ENCODE measurements at regions of chr12 and their contacts with region 1.

Region 1: DNA sequence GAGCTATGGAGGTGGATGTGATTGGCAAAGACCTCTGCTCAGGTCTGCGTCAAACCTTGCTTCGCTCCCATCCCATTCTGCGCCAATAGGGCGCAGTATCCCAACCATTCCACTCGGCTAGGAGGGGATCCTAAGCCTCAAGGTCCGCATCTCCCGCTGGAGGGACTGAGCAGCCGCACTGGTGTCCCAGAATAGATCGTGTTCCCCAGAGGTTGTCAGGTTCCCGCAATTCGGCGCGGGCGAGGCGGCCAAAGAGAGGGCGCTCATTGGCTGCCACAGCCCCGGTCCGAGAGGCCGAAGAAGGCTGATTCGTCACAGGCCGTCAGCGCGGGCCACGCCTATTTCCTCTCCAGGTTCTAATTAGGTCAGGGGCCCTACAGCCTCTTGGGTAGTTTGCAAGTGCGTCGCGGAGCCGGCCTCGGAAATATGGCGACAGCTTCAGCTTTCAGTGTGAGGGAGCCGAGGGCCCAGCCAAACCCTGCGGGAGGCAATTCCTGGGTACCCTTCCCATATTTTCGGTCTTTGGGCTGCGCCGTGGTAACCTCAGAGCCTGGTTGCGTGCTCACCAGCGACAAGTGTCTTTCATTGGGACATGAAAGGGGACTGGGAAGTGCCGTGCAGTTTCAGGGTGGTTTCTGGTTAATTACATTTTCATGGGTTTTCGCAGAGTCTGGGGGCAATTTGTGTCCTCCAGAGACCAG is 5.0 kb downstream of the OR10AD1 start:
- DNase-seq: peak; percentile 97
- ATAC-seq: peak; percentile 98
- H3K4me3 Mint-ChIP-seq: peak overlapping the region; percentile 80
- H3K27ac Mint-ChIP-seq: peak overlapping the region; percentile 99
- H3K4me1 Mint-ChIP-seq: peaks cover 30% of the 10 kb centered on the region
- H3K27me3 Mint-ChIP-seq: peaks cover 4% of the 10 kb centered on the region

Region 2: GRCh38 chr12:47904713-47905310 is 293.3 kb before region 1 on chr12 and contains the start of gene VDR:
- CTCF ChIA-PET with region 1: no interaction called
- POLR2A ChIA-PET with region 1: no interaction called
- intact Hi-C with region 1: loop called in 1 of 2 experiments (anchors 1 kb)
- DNase-seq: peak; percentile 88
- ATAC-seq: peak; percentile 76
- H3K4me3 Mint-ChIP-seq: peak within 1 kb of the TSS; percentile 94
- H3K27ac Mint-ChIP-seq: peak within 1 kb of the TSS; percentile 92
- H3K4me1 Mint-ChIP-seq: peaks cover 45% of the 10 kb centered on the region
- H3K27me3 Mint-ChIP-seq: peaks cover 20% of the 10 kb centered on the region
- total RNA-seq, gene VDR: 108 to 124 TPM

Region 3: DNA sequence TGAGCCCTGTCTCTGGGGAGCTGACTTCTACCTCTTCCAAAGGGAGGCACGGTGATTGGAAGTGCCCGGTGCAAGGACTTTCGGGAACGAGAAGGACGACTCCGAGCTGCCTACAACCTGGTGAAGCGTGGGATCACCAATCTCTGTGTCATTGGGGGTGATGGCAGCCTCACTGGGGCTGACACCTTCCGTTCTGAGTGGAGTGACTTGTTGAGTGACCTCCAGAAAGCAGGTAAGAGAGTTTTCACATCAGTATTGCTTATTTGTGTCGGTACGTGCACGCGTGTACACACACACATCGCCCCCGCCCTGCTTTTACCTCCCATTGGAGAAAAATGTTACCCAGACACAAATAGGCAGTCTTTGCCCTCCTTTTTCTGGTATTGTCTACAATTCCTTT is 65.3 kb before region 1 on chr12:
- CTCF ChIA-PET with region 1: no interaction called
- POLR2A ChIA-PET with region 1: no interaction called
- intact Hi-C with region 1: no loop called
- DNase-seq: no peak
- ATAC-seq: no peak
- H3K4me3 Mint-ChIP-seq: no peak overlapping the region
- H3K27ac Mint-ChIP-seq: no peak overlapping the region
- H3K4me1 Mint-ChIP-seq: no peaks in the 10 kb centered on the region
- H3K27me3 Mint-ChIP-seq: no peaks in the 10 kb centered on the region

Region 4: DNA sequence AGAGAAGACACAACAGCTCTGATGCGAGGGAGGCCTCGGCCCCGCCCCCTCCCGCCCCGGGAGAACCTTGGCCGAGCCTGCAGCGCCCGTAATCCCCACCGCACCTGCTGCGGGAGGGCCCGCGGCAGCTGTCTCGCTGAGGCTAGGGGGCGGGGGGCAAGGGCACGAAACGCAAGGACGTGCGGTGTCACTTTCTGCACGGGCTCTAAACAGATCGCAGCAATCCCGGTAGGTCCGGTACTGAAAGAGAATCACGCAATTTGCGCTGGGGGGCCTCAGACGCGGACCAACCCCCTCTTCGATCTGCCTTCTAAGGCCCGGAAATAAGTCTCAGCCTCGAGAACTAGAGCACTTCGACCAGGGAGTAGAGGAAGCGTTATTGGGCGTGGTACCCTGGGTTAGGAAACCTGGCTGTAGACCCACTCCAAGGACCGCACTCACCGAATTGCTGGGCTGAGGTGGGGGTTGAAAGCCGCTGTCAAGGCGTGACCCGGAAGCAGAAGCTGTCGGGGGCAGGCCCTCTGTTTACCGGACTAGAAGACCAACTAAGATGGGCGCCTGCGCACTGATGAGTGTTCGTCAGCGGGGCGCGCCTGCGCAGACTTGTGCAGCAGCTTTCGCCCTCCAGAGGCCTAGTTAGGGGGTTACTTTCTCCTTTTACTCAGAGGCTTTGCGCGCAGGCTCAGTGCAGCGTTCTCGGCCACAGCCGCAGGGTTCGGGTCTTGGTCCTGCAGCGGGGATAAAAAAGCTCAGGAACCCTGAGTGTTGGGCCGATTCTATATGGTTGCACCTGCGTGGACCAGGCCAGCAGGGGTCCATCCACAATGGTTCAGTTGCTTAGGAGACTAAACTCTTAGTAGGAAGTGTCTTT is 40.9 kb before region 1 on chr12 and contains the start of gene ASB8:
- CTCF ChIA-PET with region 1: interaction called, 6 read pairs
- POLR2A ChIA-PET with region 1: interaction called, 9 read pairs
- intact Hi-C with region 1: loop called (anchors 1 to 5 kb)
- DNase-seq: peak; percentile 100
- ATAC-seq: peak; percentile 96
- H3K4me3 Mint-ChIP-seq: peak within 1 kb of the TSS; percentile 88
- H3K27ac Mint-ChIP-seq: peak within 1 kb of the TSS; percentile 94
- H3K4me1 Mint-ChIP-seq: peaks cover 40% of the 10 kb centered on the region
- H3K27me3 Mint-ChIP-seq: no peaks in the 10 kb centered on the region
- total RNA-seq, gene ASB8: 28.8 to 33.0 TPM

Region 5: GRCh38 chr12:48350249-48351021 is 152.3 kb after region 1 on chr12 and contains the start of gene ZNF641:
- CTCF ChIA-PET with region 1: interaction called, 4 read pairs
- POLR2A ChIA-PET with region 1: no interaction called
- intact Hi-C with region 1: loop called (anchors 2 to 5 kb)
- DNase-seq: peak; percentile 84
- ATAC-seq: peak; percentile 91
- H3K4me3 Mint-ChIP-seq: peak within 1 kb of the TSS; percentile 94
- H3K27ac Mint-ChIP-seq: peak within 1 kb of the TSS; percentile 87
- H3K4me1 Mint-ChIP-seq: peaks cover 28% of the 10 kb centered on the region
- H3K27me3 Mint-ChIP-seq: no peaks in the 10 kb centered on the region
- total RNA-seq, gene ZNF641: 5.6 to 6.2 TPM

Region 6: GRCh38 chr12:48542300-48542928 is 344.3 kb after region 1 on chr12:
- CTCF ChIA-PET with region 1: no interaction called
- POLR2A ChIA-PET with region 1: no interaction called
- intact Hi-C with region 1: loop called in 1 of 2 experiments (anchors 5 kb)
- DNase-seq: peak; percentile 80
- ATAC-seq: peak; percentile 55
- H3K4me3 Mint-ChIP-seq: no peak overlapping the region
- H3K27ac Mint-ChIP-seq: no peak overlapping the region
- H3K4me1 Mint-ChIP-seq: peaks cover 11% of the 10 kb centered on the region
- H3K27me3 Mint-ChIP-seq: no peaks in the 10 kb centered on the region

Region 7: DNA sequence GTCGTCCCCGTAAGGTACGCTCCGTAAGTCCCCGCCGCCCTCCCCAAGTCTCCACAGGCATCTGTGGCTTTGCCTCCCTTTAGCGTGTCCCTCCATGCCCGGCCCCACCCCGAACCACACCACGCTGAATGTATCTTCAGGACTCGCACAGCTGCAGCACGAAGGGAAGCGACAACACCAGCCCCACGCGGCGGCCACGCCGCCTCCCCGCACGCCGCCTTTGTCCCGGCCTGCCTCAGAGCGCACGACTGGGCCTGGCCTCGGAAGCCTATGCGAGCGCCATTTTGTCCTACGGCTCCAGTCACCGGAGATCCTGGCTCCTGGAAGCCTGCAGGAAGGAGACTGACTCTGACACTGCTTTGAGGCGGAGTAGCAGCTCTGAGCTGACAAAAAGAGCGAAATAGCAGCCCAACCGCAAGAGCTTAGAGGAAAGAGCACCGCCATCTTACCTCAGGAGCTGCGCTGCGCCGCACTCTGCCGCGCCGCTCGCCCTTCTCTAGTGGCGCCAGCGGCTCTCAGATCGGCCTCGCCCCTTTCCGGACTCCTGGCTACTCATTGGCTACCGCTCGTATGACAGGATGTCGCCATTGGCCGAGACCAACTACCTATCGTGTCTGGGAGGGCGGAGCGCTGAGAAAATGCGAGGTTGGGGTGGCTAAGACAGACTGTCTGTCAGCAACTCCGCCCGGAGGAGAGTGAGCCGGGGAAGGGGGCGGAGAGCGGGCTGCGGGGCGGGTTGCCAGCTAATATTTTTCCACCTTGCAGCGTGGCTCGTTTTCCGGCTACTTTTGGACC is 483.8 kb after region 1 on chr12 and contains the start of gene KANSL2:
- CTCF ChIA-PET with region 1: no interaction called
- POLR2A ChIA-PET with region 1: no interaction called
- intact Hi-C with region 1: loop called in 1 of 2 experiments (anchors 2 kb)
- DNase-seq: peak; percentile 99
- ATAC-seq: peak; percentile 96
- H3K4me3 Mint-ChIP-seq: peak within 1 kb of the TSS; percentile 87
- H3K27ac Mint-ChIP-seq: peak within 1 kb of the TSS; percentile 91
- H3K4me1 Mint-ChIP-seq: peaks cover 41% of the 10 kb centered on the region
- H3K27me3 Mint-ChIP-seq: no peaks in the 10 kb centered on the region
- total RNA-seq, gene KANSL2: 44.0 to 59.8 TPM

Measured in activated CD4-positive, alpha-beta T cell treated with anti-CD3 and anti-CD28 coated beads for 36 hours (primary cell).